ENCODE measurements at regions of chr17 and their contacts with region 1.

Region 1: DNA sequence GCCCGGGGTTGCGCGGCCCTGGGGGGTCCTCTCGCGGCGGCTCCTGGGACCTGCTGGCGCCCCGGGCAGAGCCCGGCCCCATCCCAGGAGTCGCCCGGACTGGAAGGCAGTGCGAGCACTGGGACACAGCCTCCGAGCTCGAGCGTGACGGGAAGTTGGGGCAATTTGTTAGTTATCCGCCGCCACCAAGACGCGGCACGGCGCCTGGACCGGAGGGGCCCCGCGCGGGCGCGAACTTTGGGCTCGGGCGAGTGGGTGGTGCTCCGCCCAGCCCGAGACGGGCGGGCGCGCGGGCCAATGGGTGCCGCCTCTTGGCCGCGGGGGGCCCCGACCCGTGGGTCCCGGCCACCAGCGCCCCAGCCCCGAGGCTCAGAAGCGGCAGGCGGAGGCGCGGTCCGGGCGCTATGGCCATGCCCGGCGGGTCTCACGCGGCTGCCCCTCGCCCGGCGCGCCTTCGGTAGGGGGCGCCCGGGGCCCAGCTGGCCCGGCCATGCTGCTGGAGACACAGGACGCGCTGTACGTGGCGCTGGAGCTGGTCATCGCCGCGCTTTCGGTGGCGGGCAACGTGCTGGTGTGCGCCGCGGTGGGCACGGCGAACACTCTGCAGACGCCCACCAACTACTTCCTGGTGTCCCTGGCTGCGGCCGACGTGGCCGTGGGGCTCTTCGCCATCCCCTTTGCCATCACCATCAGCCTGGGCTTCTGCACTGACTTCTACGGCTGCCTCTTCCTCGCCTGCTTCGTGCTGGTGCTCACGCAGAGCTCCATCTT is at the start of gene ADORA2B:
- DNase-seq: peak; percentile 77 to 87 (median 78)
- ATAC-seq: peak; percentile 71
- H3K4me3 ChIP-seq: peak within 1 kb of the TSS; percentile 22
- H3K4me1 ChIP-seq: peaks cover 11% of the 10 kb centered on the region
- CTCF ChIP-seq: peak; percentile 51
- total RNA-seq, gene ADORA2B: 11.9 to 32.9 (median 24.4) TPM

Region 2: DNA sequence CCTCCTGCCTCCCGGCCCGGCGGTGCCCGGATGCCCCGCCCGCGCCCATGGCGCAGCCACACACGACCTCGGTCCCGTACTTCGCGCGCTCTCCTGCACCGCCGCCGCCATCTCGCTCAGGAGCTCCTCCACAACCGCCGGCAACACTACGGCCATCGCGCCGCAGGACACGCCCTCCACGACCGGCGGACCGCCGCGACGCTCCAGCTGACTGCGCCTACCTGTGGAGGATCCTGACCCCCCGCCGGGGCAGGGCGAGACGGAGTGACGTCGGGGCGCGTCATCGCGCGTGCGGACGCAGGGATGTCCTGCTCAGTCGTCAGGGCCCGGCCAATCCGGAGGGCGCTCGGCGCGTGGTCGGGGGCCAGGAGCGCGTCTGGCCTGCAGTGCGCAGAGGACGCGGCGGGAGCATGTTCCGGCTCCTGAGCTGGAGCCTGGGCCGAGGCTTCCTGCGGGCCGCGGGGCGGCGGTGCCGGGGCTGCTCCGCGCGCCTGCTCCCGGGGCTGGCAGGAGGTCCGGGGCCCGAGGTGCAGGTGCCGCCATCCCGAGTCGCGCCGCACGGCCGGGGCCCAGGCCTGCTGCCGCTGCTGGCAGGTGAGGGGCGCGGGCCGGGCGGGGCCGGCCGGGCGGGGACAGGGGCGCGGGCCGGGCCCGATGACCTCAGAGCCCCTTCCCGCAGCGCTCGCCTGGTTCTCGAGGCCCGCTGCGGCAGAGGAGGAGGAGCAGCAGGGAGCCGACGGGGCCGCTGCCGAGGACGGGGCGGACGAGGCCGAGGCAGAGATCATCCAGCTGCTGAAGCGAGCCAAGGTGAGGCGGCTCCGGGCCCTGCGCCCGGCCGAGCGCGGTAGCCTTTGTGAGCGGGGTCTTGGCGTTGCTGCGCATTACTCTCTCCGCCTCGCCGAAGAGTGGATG is 54.8 kb after region 1 on chr17 and contains the starts of genes TTC19 and ZSWIM7:
- intact Hi-C with region 1: loop called in 1 of 2 experiments (anchors 10 kb)
- DNase-seq: peak; percentile 98 to 99 (median 99)
- ATAC-seq: peak; percentile 95
- H3K4me3 ChIP-seq: peak within 1 kb of the TSS; percentile 58
- H3K4me1 ChIP-seq: peaks cover 8% of the 10 kb centered on the region
- CTCF ChIP-seq: no peak
- total RNA-seq, gene TTC19: 32.5 to 52.2 (median 41.9) TPM
- total RNA-seq, gene ZSWIM7: 17.3 to 32.1 (median 26.0) TPM